ENCODE measurements at regions of chr5 and their contacts with region 1.

Region 1: GRCh38 chr5:35926389-35927051 is 11.9 kb downstream of the CAPSL start:
- DNase-seq: peak; percentile 63
- H3K4me3 ChIP-seq: peak overlapping the region; percentile 17 to 36; a peak in 2 of 4 replicates
- H3K27ac ChIP-seq: no peak overlapping the region
- H3K4me1 ChIP-seq: peaks cover 0 to 5% of the 10 kb centered on the region in 2 experiments; a peak in 2 of 4 replicates
- H3K27me3 ChIP-seq: no peaks in the 10 kb centered on the region
- CTCF ChIP-seq: peak; percentile 86
- EP300 ChIP-seq: no peak
- RAD21 ChIP-seq: peak; percentile 93

Region 2: GRCh38 chr5:35230038-35230631 is 696.4 kb before region 1 on chr5 and contains the start of gene PRLR:
- CTCF ChIA-PET with region 1: interaction called, 12 read pairs
- POLR2A ChIA-PET with region 1: no interaction called
- DNase-seq: peak; percentile 55
- H3K4me3 ChIP-seq: peak within 1 kb of the TSS; percentile 37 to 41; a peak in 3 of 4 replicates
- H3K27ac ChIP-seq: no peak within 1 kb of the TSS
- H3K4me1 ChIP-seq: peaks cover 0 to 9% of the 10 kb centered on the region in 2 experiments; a peak in 1 of 4 replicates
- H3K27me3 ChIP-seq: peaks cover 38% of the 10 kb centered on the region
- CTCF ChIP-seq: no peak
- EP300 ChIP-seq: no peak
- RAD21 ChIP-seq: no peak
- polyA plus RNA-seq, gene PRLR: 0.13 and 0.34 TPM in 2 replicates

Region 3: DNA sequence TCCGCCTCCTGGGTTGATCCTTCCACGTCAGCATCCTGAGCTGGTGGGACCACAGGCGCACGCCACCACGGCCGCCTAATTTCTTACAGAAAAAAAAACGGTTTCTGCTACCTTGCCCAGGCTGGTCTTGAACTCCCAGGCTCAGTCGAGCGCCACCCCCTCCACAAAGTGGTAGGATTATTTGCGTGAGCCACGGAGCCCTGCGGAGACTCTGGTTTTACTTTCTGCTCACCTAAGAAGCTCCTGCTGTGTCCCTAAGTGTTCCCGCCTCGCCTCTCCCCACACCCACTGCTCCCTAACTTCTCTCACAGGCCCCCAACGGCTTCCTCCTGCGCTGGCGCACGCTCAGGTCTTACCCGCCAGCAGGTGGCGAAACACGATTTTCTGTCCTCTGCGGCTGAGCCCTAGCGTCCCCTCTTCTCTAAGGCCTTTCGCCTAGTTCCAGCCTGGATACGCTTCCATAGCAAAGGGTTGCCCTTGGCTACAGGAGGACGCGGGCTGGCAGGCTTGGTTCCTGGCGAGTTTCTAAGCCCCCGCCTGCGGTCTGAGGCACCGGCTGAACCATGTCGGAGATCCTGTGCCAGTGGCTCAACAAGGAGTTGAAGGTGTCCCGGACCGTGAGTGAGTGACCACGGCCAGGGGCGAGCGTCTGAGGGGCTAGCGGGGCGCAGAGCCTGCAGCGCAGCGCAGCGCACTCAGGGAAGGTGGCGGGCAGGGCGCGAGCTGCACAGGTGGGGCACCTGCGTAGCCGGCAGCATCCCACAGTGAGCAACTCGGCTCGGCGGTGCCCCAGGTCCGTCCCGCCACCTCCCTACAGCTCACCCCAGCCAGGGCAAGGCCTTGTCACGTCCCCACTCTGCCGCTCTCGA is 308.9 kb before region 1 on chr5 and contains the start of gene SPEF2:
- CTCF ChIA-PET with region 1: interaction called, 41 read pairs
- POLR2A ChIA-PET with region 1: no interaction called
- DNase-seq: peak; percentile 87
- H3K4me3 ChIP-seq: peak within 1 kb of the TSS; percentile 81 to 90
- H3K27ac ChIP-seq: peak within 1 kb of the TSS in 1 of 2 experiments; percentile 2; a peak in 1 of 4 replicates
- H3K4me1 ChIP-seq: peaks cover 0 to 7% of the 10 kb centered on the region in 2 experiments; a peak in 2 of 4 replicates
- H3K27me3 ChIP-seq: no peaks in the 10 kb centered on the region
- CTCF ChIP-seq: peak; percentile 85
- EP300 ChIP-seq: no peak
- RAD21 ChIP-seq: peak; percentile 66
- polyA plus RNA-seq, gene SPEF2: 1.6 and 2.6 TPM in 2 replicates

Region 4: DNA sequence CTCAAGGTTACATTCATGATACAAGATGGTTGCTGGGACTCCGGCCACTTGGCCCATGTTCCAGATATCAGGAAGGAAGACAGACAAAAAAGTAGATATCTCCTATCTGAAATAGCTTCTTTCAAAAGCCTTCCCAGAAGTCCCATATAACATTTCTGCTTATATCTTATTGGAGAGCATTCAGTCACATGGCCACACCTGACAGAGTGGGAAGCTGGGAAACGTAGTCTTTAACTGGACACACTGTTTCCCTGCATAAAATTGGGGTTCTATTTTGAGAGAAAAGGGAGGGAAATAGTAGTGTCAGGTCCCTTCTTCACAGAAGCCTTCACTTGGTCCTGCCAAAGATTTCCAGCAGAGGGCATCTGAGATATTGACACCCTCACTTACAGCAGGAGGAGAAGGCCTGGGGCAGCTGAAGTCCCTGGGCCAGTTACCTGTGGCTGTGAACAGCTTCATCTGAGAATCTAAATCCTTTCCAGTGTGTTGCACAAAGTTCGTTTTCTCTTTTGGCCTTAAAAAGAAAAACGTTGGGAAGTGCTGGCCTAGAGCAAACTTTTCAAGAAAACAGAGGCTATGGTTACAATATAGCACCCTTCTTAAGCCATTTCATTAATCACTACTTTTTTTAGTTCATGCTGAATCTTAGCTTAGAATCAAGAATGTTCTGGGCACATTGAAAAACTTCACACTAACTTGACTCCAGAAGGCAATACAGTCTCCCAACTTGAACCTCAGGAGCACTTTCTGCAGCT is 275.3 kb before region 1 on chr5:
- CTCF ChIA-PET with region 1: interaction called, 29 read pairs
- POLR2A ChIA-PET with region 1: no interaction called
- DNase-seq: peak; percentile 24
- H3K4me3 ChIP-seq: no peak overlapping the region
- H3K27ac ChIP-seq: no peak overlapping the region
- H3K4me1 ChIP-seq: no peaks in the 10 kb centered on the region
- H3K27me3 ChIP-seq: no peaks in the 10 kb centered on the region
- CTCF ChIP-seq: peak; percentile 64
- EP300 ChIP-seq: no peak
- RAD21 ChIP-seq: peak; percentile 56

Region 5: GRCh38 chr5:35777358-35778087 is 149.0 kb before region 1 on chr5:
- CTCF ChIA-PET with region 1: interaction called, 150 read pairs
- POLR2A ChIA-PET with region 1: no interaction called
- DNase-seq: peak; percentile 34
- H3K4me3 ChIP-seq: no peak overlapping the region
- H3K27ac ChIP-seq: no peak overlapping the region
- H3K4me1 ChIP-seq: peaks cover 0 to 14% of the 10 kb centered on the region in 2 experiments; a peak in 2 of 4 replicates
- H3K27me3 ChIP-seq: no peaks in the 10 kb centered on the region
- CTCF ChIP-seq: peak; percentile 74
- EP300 ChIP-seq: no peak
- RAD21 ChIP-seq: peak; percentile 68

Region 6: GRCh38 chr5:35789732-35790456 is 136.6 kb before region 1 on chr5:
- CTCF ChIA-PET with region 1: interaction called, 14 read pairs
- POLR2A ChIA-PET with region 1: no interaction called
- DNase-seq: no peak
- H3K4me3 ChIP-seq: no peak overlapping the region
- H3K27ac ChIP-seq: no peak overlapping the region
- H3K4me1 ChIP-seq: 0 out of 4 replicates have a peak, but pooled peaks cover 0 to 6% of the 10 kb centered on the region in 2 experiments
- H3K27me3 ChIP-seq: no peaks in the 10 kb centered on the region
- CTCF ChIP-seq: no peak
- EP300 ChIP-seq: no peak
- RAD21 ChIP-seq: no peak

Region 7: DNA sequence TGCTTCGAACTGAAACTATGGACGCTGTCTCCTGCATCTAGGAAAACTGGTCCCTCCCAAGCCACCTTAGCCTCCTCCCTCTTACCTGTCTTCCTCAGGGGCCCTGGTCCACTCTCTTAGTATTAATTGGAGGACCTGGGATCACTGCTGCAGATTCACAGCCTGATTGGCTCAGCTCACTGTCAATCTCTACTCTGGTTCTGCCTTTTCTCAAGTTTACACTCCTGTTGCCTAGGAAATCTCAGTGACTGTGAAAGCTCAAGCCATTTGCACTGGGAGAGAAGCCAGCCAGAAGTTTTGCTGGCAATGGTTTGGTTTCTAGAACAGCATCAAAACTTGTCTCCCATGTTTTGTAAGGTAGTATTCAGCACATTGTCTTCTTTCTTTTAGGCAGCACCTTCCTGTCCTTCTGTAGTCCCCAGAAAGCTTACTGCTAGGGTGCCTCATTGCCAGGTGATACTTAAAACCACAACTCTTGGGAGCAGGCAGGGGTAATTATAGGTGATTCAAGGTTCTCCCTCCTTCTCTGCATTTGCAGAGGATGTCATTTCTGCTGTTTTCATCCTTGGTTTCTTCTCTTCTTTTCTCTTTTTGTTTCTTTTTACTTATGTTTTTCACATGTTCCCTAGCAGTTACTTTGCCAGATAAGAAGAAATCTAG is 12.2 kb after region 1 on chr5 and contains the start of gene CAPSL:
- CTCF ChIA-PET with region 1: interaction called, 11 read pairs
- POLR2A ChIA-PET with region 1: no interaction called
- DNase-seq: peak; percentile 24
- H3K4me3 ChIP-seq: no peak within 1 kb of the TSS
- H3K27ac ChIP-seq: no peak within 1 kb of the TSS
- H3K4me1 ChIP-seq: no peaks in the 10 kb centered on the region
- H3K27me3 ChIP-seq: peaks cover 12% of the 10 kb centered on the region
- CTCF ChIP-seq: no peak
- EP300 ChIP-seq: no peak
- RAD21 ChIP-seq: no peak
- polyA plus RNA-seq, gene CAPSL: 0.23 and 0.31 TPM in 2 replicates

Region 8: GRCh38 chr5:36323926-36324781 is 397.6 kb after region 1 on chr5:
- CTCF ChIA-PET with region 1: no interaction called
- POLR2A ChIA-PET with region 1: no interaction called
- DNase-seq: no peak
- H3K4me3 ChIP-seq: no peak overlapping the region
- H3K27ac ChIP-seq: no peak overlapping the region
- H3K4me1 ChIP-seq: no peaks in the 10 kb centered on the region
- H3K27me3 ChIP-seq: no peaks in the 10 kb centered on the region
- CTCF ChIP-seq: no peak
- EP300 ChIP-seq: no peak
- RAD21 ChIP-seq: no peak

Region 9: DNA sequence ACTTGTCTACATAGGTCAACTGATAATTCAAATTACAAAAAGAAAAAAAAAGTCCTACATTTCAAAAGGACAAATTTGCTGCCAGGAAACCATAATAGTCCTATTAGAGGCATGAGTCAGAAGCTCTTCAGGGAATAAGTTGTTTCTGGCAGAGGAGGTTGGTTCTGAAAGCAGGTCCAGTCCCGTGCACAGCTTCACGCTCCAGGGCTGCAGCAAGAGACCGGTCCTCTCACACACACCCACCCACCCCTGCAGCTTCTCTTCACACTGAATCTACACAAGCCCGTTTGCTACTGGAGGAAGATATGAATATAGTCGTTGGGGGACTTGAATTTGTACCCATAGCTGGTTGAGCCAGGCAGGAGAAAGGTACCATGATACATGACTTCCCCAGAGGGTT is 643.0 kb after region 1 on chr5:
- CTCF ChIA-PET with region 1: no interaction called
- POLR2A ChIA-PET with region 1: no interaction called
- DNase-seq: no peak
- H3K4me3 ChIP-seq: no peak overlapping the region
- H3K27ac ChIP-seq: no peak overlapping the region
- H3K4me1 ChIP-seq: no peaks in the 10 kb centered on the region
- H3K27me3 ChIP-seq: no peaks in the 10 kb centered on the region; the same call in 1 of the 2 replicates
- CTCF ChIP-seq: no peak
- EP300 ChIP-seq: no peak
- RAD21 ChIP-seq: no peak